Left cardiac atrium (tissue), 4 donors: ENCODE measurements at regions of chr3 and their contacts with region 1.

Region 1: GRCh38 chr3:32177702-32178198 is 60.7 kb upstream of the CMTM8 start:
- DNase-seq: peak; percentile 63
- ATAC-seq: peak; percentile 90 to 94

Region 2: GRCh38 chr3:32238453-32239306 is 60.9 kb after region 1 on chr3 and contains the start of gene CMTM8:
- intact Hi-C with region 1: loop called in 1 of 2 experiments (anchors 10 kb)
- DNase-seq: peak; percentile 50
- ATAC-seq: peak; percentile 89 to 95
- total RNA-seq, gene CMTM8: 5.7 to 6.3 TPM

Region 3: GRCh38 chr3:32334675-32335074 is 156.9 kb after region 1 on chr3:
- intact Hi-C with region 1: loop called in 1 of 2 experiments (anchors 10 kb)
- DNase-seq: no peak
- ATAC-seq: no peak

Region 4: GRCh38 chr3:32340039-32340438 is 162.3 kb after region 1 on chr3:
- intact Hi-C with region 1: loop called (anchors 2 to 10 kb)
- DNase-seq: no peak
- ATAC-seq: peak; percentile 86 to 87

Region 5: DNA sequence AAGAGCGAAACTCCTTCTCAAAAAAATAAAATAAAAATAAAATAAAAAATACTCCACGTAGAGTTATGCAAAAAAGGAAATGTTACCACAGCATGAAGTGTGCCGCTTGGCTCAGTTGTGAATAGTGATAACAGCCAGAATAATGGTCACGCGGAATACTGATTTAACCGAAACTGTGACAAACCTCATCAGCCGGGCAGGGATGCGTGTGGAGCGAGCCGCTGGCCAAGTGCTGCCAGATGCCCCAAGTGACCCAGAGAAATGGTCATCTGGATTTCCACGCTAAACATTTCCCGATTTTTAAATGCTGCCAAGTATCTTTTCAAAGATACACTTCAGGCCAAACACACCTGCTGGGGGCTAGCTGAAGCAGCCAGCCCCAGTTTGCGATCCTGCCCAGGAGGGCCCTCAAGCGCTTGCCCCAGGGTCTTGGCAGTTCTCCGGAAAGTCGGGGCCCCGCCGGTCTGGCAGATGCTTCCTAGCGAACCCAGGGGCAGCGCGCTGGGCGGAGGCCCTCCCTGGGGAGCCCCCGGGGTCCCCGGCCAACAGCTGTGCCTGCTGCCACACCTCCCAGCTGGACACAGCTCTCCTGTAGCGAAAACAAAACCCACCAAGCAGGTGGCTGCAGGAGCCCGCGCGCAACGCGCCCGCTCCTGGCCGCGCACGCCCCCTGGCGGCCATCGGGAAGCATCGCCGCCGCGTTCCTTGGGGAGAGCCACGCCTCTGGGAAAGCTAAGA is 289.8 kb after region 1 on chr3:
- intact Hi-C with region 1: loop called in 1 of 2 experiments (anchors 5 kb)
- DNase-seq: peak; percentile 71
- ATAC-seq: peak; percentile 89 to 91